Endothelial cell of umbilical vein (primary cell): ENCODE measurements at regions of chr2 and their contacts with region 1.

Region 1: GRCh38 chr2:163171786-163172531 is 333.4 kb upstream of the KCNH7 start:
- DNase-seq: no peak
- H3K4me3 ChIP-seq: no peak overlapping the region
- H3K27ac ChIP-seq: no peak overlapping the region
- H3K4me1 ChIP-seq: no peaks in the 10 kb centered on the region
- H3K27me3 ChIP-seq: no peaks in the 10 kb centered on the region
- CTCF ChIP-seq: no peak
- POLR2A ChIP-seq: no peak

Region 2: DNA sequence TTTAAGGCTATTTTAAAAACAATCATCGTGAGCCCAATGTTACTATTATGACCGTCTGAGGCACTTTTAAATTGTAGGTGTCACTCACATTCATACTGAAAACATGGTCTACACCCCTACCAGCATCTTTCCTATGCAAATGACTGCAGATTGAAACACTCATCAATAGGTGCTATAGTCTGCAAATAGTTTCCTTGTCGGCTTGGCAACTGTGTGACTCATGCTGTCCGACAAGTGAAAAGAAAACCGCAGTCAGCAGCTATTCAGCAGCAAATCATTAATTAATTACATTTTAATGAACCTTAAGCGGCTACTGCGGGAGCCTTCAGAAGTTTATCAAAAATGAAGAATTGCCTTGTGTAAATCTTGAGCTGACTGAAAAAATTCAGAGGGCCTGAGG is 429.4 kb after region 1 on chr2:
- CTCF ChIA-PET with region 1: no interaction called
- POLR2A ChIA-PET with region 1: no interaction called
- dilution Hi-C with region 1: no loop called
- intact Hi-C with region 1: no loop called
- DNase-seq: no peak
- H3K4me3 ChIP-seq: no peak overlapping the region
- H3K27ac ChIP-seq: no peak overlapping the region
- H3K4me1 ChIP-seq: no peaks in the 10 kb centered on the region
- H3K27me3 ChIP-seq: no peaks in the 10 kb centered on the region
- CTCF ChIP-seq: no peak
- POLR2A ChIP-seq: no peak

Region 3: GRCh38 chr2:164061129-164061746 is 889.3 kb after region 1 on chr2:
- CTCF ChIA-PET with region 1: interaction called, 34 read pairs
- POLR2A ChIA-PET with region 1: no interaction called
- dilution Hi-C with region 1: no loop called
- intact Hi-C with region 1: loop called (anchors 1 kb)
- DNase-seq: peak; percentile 61
- H3K4me3 ChIP-seq: no peak overlapping the region
- H3K27ac ChIP-seq: no peak overlapping the region
- H3K4me1 ChIP-seq: no peaks in the 10 kb centered on the region
- H3K27me3 ChIP-seq: no peaks in the 10 kb centered on the region
- CTCF ChIP-seq: peak; percentile 53 to 58
- POLR2A ChIP-seq: no peak

Region 4: GRCh38 chr2:164479460-164479859 is 1307.5 kb after region 1 on chr2:
- CTCF ChIA-PET with region 1: interaction called, 19 read pairs
- POLR2A ChIA-PET with region 1: no interaction called
- dilution Hi-C with region 1: no loop called
- intact Hi-C with region 1: no loop called
- DNase-seq: peak; percentile 58
- H3K4me3 ChIP-seq: no peak overlapping the region
- H3K27ac ChIP-seq: no peak overlapping the region
- H3K4me1 ChIP-seq: no peaks in the 10 kb centered on the region
- H3K27me3 ChIP-seq: no peaks in the 10 kb centered on the region
- CTCF ChIP-seq: peak; percentile 13 to 28
- POLR2A ChIP-seq: no peak

Region 5: DNA sequence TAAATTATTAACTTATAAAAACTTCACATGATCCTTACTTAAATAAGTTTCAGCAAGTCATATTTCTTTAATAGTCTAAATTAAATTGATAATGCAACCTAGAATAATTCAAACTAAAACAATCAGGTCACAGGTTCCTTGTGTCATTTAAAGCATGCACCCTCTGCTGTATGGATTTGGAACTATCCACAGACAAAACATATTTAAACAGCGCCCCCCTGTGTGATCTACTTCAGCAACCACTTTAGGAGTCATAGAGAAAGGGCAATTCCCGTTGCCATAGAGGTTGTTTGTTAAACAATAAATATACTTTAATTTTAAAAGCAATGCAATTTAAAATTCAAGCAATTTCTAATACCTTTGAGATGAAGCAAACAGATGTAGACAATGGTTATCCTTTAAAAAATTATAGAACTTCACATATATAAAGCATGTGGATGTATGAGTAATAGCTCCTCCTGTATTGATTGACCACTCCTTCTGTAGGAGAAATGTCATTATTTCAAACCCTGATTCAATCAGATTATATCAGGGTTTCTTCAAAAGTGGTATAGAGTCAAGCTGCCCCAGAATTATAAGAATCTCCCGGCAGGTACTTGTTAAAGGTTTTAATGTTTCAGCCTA is 1428.1 kb after region 1 on chr2:
- CTCF ChIA-PET with region 1: interaction called, 12 read pairs
- POLR2A ChIA-PET with region 1: no interaction called
- dilution Hi-C with region 1: no loop called
- intact Hi-C with region 1: loop called (anchors 1 kb)
- DNase-seq: peak; percentile 91
- H3K4me3 ChIP-seq: no peak overlapping the region
- H3K27ac ChIP-seq: peak overlapping the region; percentile 31
- H3K4me1 ChIP-seq: peaks cover 20% of the 10 kb centered on the region
- H3K27me3 ChIP-seq: no peaks in the 10 kb centered on the region
- CTCF ChIP-seq: peak; percentile 77 to 86
- POLR2A ChIP-seq: no peak